ENCODE measurements at regions of chr17 and their contacts with region 1.

Region 1: GRCh38 chr17:309361-309888 is 43.2 kb downstream of the RPH3AL start:
- DNase-seq: peak; percentile 65 to 86
- H3K4me3 ChIP-seq: no peak overlapping the region
- H3K4me3 Mint-ChIP-seq: no peak overlapping the region
- H3K27ac Mint-ChIP-seq: no peak overlapping the region
- H3K4me1 ChIP-seq: no peaks in the 10 kb centered on the region
- H3K4me1 Mint-ChIP-seq: no peaks in the 10 kb centered on the region
- H3K27me3 ChIP-seq: no peaks in the 10 kb centered on the region
- H3K27me3 Mint-ChIP-seq: no peaks in the 10 kb centered on the region
- CTCF ChIP-seq: peak; percentile 88 to 98

Region 2: GRCh38 chr17:323721-324571 is 14.5 kb after region 1 on chr17:
- CTCF ChIA-PET with region 1: no interaction called
- POLR2A ChIA-PET with region 1: no interaction called
- intact Hi-C with region 1: no loop called
- DNase-seq: no peak
- H3K4me3 ChIP-seq: no peak overlapping the region
- H3K4me3 Mint-ChIP-seq: no peak overlapping the region
- H3K27ac Mint-ChIP-seq: no peak overlapping the region
- H3K4me1 ChIP-seq: no peaks in the 10 kb centered on the region
- H3K4me1 Mint-ChIP-seq: no peaks in the 10 kb centered on the region
- H3K27me3 ChIP-seq: no peaks in the 10 kb centered on the region
- H3K27me3 Mint-ChIP-seq: no peaks in the 10 kb centered on the region
- CTCF ChIP-seq: no peak

Region 3: DNA sequence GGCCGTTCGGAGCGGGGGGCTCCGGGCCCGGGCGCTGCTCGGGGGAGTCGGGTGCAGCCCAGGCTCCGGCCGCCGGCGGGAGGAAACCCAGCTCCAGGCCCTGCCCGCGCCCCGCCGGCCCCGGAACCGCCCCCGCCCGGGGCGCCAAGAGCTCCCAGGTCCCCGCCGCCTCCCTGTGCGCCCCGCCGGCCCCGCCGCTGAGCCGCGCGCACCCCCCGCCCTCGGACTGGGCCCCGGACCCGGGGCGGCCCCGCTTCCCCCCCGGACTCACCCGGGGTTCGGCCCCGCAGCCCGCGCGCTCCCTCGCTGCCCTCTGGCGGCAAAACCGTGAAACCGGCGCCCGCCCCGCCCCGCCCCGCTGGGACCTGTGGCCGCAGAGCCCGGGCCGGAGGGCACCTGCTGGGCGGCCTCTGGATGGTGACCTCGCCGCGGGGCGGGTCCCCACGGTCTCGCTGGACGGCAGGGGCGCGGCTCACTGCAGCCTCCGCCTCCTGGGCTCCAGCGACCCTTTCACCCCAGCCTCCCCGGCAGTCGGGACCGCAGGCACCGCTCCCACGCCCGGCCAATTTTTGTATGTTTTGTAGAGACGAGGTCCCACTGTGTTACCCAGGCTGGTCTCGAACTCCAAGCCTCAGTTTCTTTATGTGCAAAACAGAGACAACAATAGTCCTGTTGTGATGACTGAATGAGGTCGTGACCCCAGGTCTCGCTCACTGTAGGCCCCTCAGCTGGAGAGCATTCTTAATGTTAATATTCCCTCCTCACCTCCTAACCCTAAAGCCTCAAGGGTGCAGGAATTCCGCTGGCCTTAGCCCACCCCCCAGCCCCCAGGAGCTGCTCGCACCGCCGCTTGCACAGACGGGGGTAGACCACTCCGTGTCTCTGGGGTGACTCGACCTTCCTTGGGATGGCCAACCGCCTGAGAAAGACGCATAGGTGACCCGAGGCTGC is 76.8 kb after region 1 on chr17:
- CTCF ChIA-PET with region 1: no interaction called
- POLR2A ChIA-PET with region 1: no interaction called
- intact Hi-C with region 1: loop called (anchors 5 kb)
- DNase-seq: peak; percentile 84 to 92
- H3K4me3 ChIP-seq: peak overlapping the region; percentile 65
- H3K4me3 Mint-ChIP-seq: peak overlapping the region; percentile 71
- H3K27ac Mint-ChIP-seq: peak overlapping the region; percentile 56
- H3K4me1 ChIP-seq: peaks cover 22% of the 10 kb centered on the region
- H3K4me1 Mint-ChIP-seq: peaks cover 24% of the 10 kb centered on the region
- H3K27me3 ChIP-seq: no peaks in the 10 kb centered on the region
- H3K27me3 Mint-ChIP-seq: no peaks in the 10 kb centered on the region
- CTCF ChIP-seq: peak; percentile 56 to 65

Measured in Caco-2 (cell line).